Aorta (tissue), 5 donors: ENCODE measurements at regions of chr1 and their contacts with region 1.

Region 1: GRCh38 chr1:42586016-42586415 is 72.2 kb upstream of the PPIH start:
- DNase-seq: no peak
- ATAC-seq: no peak
- H3K4me3 ChIP-seq: no peak overlapping the region
- H3K27ac ChIP-seq: no peak overlapping the region
- H3K4me1 ChIP-seq: no peaks in the 10 kb centered on the region
- H3K27me3 ChIP-seq: no peaks in the 10 kb centered on the region

Region 2: GRCh38 chr1:42756956-42757891 is 171.2 kb after region 1 on chr1:
- intact Hi-C with region 1: loop called in 1 of 2 experiments (anchors 10 kb)
- DNase-seq: peak in 1 of 2 donors; percentile 31
- ATAC-seq: no peak
- H3K4me3 ChIP-seq: no peak overlapping the region
- H3K27ac ChIP-seq: no peak overlapping the region
- H3K4me1 ChIP-seq: no peaks in the 10 kb centered on the region
- H3K27me3 ChIP-seq: no peaks in the 10 kb centered on the region